H1 (cell line): ENCODE measurements at regions of chr13 and their contacts with region 1.

Region 1: GRCh38 chr13:99969919-99970621 is 1.5 kb downstream of the ZIC5 start:
- DNase-seq: peak in 1 of 2 experiments; percentile 76
- H3K4me3 ChIP-seq: peak overlapping the region; percentile 79 to 96 (median 92)
- H3K27ac ChIP-seq: peak overlapping the region; percentile 64; the same call in 1 of the 2 replicates
- H3K4me1 ChIP-seq: peaks cover 7 to 23% (median 15%) of the 10 kb centered on the region in 4 experiments
- H3K27me3 ChIP-seq: no peaks in the 10 kb centered on the region
- CTCF ChIP-seq: no peak
- EP300 ChIP-seq: peak in 1 of 2 experiments; percentile 54; a peak in 1 of 3 replicates
- POLR2A ChIP-seq: no peak
- RAD21 ChIP-seq: no peak

Region 2: DNA sequence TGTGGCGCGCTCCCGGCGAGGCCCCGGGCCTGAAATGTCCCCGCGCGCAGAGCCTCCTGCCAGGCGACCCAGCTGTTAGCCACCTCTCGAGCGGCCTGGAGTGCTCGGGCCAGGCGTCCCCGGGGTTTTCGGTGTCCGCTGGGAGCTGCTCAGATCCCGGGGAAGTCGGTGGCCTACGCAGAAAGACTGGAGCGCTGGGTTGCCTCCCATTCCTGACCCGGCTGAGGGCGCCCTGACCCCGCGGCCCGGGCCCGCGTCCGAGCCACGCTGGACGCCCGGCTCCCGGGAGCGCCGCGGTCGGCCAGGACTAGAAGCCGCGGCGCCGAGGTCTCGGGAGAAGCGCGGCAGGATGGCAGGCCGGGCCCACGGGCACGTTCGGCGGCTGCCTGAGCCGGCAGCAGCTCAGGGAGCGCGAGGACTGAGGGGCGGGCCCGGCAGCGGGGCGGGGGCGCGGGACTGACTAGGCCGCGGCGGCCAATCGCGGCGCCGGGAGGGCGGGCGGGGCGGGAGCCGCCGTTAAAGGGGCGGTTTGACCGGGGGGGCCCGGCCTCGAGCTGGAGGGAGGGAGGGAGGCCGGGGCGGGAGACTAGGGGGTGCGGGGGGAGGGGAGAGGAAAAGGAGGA is 10.2 kb after region 1 on chr13:
- CTCF ChIA-PET with region 1: interaction called, 9 read pairs
- POLR2A ChIA-PET with region 1: interaction called, 98 read pairs
- DNase-seq: no peak
- H3K4me3 ChIP-seq: peak overlapping the region; percentile 73 to 96 (median 94)
- H3K27ac ChIP-seq: peak overlapping the region; percentile 94
- H3K4me1 ChIP-seq: peaks cover 0 to 20% (median 15%) of the 10 kb centered on the region in 4 experiments; a peak in 6 of 7 replicates
- H3K27me3 ChIP-seq: peaks cover 0 to 16% (median 4%) of the 10 kb centered on the region in 4 experiments; a peak in 4 of 7 replicates
- CTCF ChIP-seq: peak in 1 of 3 experiments; percentile 4; a peak in 1 of 4 replicates
- EP300 ChIP-seq: no peak
- POLR2A ChIP-seq: no peak; a peak in 2 of 3 replicates
- RAD21 ChIP-seq: peak in 1 of 2 experiments; percentile 28; a peak in 1 of 4 replicates

Region 3: GRCh38 chr13:99990126-99990977 is 20.3 kb after region 1 on chr13:
- CTCF ChIA-PET with region 1: interaction called, 10 read pairs
- POLR2A ChIA-PET with region 1: interaction called, 98 read pairs
- DNase-seq: peak in 1 of 2 experiments; percentile 81
- H3K4me3 ChIP-seq: peak overlapping the region; percentile 31 to 72 (median 40)
- H3K27ac ChIP-seq: no peak overlapping the region
- H3K4me1 ChIP-seq: peaks cover 8 to 35% (median 25%) of the 10 kb centered on the region in 4 experiments
- H3K27me3 ChIP-seq: peaks cover 3 to 75% (median 45%) of the 10 kb centered on the region in 4 experiments; a peak in 6 of 7 replicates
- CTCF ChIP-seq: no peak
- EP300 ChIP-seq: no peak
- POLR2A ChIP-seq: no peak
- RAD21 ChIP-seq: no peak

Region 4: DNA sequence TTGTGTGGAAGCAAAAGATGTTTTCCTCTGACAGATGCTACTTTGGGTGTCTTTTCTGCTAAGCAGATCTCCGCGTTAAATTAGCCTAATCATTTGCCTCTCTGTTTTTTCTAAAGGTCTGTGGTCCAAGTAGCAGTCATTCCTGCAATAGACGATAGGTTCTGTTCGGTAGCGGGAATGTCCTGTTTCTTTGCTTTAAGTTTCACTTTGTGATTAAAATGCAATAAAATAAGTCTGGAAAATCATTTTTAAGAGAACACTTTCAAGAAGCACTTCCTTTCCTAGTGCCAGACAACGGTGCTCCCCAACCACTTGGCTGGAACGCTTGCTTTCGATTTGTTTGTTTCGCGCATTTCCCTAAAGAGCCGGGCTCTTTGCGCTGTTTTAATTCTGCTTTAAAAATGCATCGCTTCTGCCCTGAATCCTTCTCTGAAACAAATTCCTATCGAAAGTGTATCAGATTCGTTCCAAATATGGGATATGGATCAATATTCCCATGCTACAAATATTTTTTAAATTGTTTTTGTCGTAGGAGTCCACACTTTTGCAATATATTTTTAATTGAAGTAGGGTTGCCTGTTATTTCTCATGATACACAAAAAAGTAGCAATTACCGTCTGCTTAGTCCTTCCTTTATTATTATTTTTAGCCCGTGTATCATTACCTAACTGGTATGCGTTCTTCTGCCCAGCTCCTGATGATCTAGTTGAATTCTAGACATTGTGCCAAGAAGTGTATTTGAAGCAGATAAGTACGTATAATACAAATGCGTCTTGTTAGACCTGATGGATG is 25.7 kb after region 1 on chr13:
- CTCF ChIA-PET with region 1: interaction called, 8 read pairs
- POLR2A ChIA-PET with region 1: interaction called, 19 read pairs
- DNase-seq: no peak
- H3K4me3 ChIP-seq: peak overlapping the region in 3 of 4 experiments; percentile 5 to 65 (median 26); a peak in 3 of 8 replicates
- H3K27ac ChIP-seq: no peak overlapping the region
- H3K4me1 ChIP-seq: peaks cover 10 to 31% (median 22%) of the 10 kb centered on the region in 4 experiments
- H3K27me3 ChIP-seq: peaks cover 7 to 62% (median 39%) of the 10 kb centered on the region in 4 experiments; a peak in 6 of 7 replicates
- CTCF ChIP-seq: no peak
- EP300 ChIP-seq: no peak
- POLR2A ChIP-seq: no peak
- RAD21 ChIP-seq: no peak